G401 (cell line): ENCODE measurements at regions of chr11 and their contacts with region 1.

Region 1: GRCh38 chr11:44538375-44539054 is 26.9 kb upstream of the CD82 start:
- DNase-seq: peak; percentile 87

Region 2: GRCh38 chr11:44110231-44110679 is 428.3 kb before region 1 on chr11:
- in situ Hi-C with region 1: loop called (anchors 25 kb)
- DNase-seq: peak; percentile 64

Region 3: GRCh38 chr11:44326615-44327475 is 211.7 kb before region 1 on chr11:
- in situ Hi-C with region 1: loop called (anchors 25 kb)
- DNase-seq: no peak